T-cell (primary cell): ENCODE measurements at regions of chr12 and their contacts with region 1.

Region 1: GRCh38 chr12:50074936-50075807 is 10.0 kb upstream of the SMARCD1 start:
- DNase-seq: peak; percentile 38 to 88 (median 71)
- ATAC-seq: peak; percentile 89 to 94 (median 92)
- H3K4me3 ChIP-seq: no peak overlapping the region
- H3K4me3 Mint-ChIP-seq: no peak overlapping the region
- H3K27ac ChIP-seq: no peak overlapping the region
- H3K27ac Mint-ChIP-seq: no peak overlapping the region
- H3K4me1 ChIP-seq: peaks cover 0 to 14% of the 10 kb centered on the region in 2 experiments
- H3K4me1 Mint-ChIP-seq: peaks cover 8 to 13% (median 9%) of the 10 kb centered on the region in 3 donors
- H3K27me3 ChIP-seq: peaks cover 0 to 8% of the 10 kb centered on the region in 2 experiments
- H3K27me3 Mint-ChIP-seq: peaks cover 0 to 5% of the 10 kb centered on the region in 2 donors

Region 2: GRCh38 chr12:49983892-49984291 is 91.3 kb before region 1 on chr12:
- CTCF ChIA-PET with region 1: no interaction called
- POLR2A ChIA-PET with region 1: no interaction called
- DNase-seq: no peak
- ATAC-seq: no peak
- H3K4me3 ChIP-seq: no peak overlapping the region
- H3K4me3 Mint-ChIP-seq: no peak overlapping the region
- H3K27ac ChIP-seq: no peak overlapping the region
- H3K27ac Mint-ChIP-seq: no peak overlapping the region
- H3K4me1 ChIP-seq: no peaks in the 10 kb centered on the region
- H3K4me1 Mint-ChIP-seq: no peaks in the 10 kb centered on the region
- H3K27me3 ChIP-seq: no peaks in the 10 kb centered on the region
- H3K27me3 Mint-ChIP-seq: no peaks in the 10 kb centered on the region

Region 3: GRCh38 chr12:50147281-50147680 is 72.1 kb after region 1 on chr12:
- CTCF ChIA-PET with region 1: no interaction called
- POLR2A ChIA-PET with region 1: no interaction called
- DNase-seq: no peak
- ATAC-seq: no peak
- H3K4me3 ChIP-seq: no peak overlapping the region
- H3K4me3 Mint-ChIP-seq: no peak overlapping the region
- H3K27ac ChIP-seq: no peak overlapping the region
- H3K27ac Mint-ChIP-seq: no peak overlapping the region
- H3K4me1 ChIP-seq: no peaks in the 10 kb centered on the region
- H3K4me1 Mint-ChIP-seq: peaks cover 16 to 23% (median 23%) of the 10 kb centered on the region in 3 donors
- H3K27me3 ChIP-seq: no peaks in the 10 kb centered on the region
- H3K27me3 Mint-ChIP-seq: no peaks in the 10 kb centered on the region

Region 4: DNA sequence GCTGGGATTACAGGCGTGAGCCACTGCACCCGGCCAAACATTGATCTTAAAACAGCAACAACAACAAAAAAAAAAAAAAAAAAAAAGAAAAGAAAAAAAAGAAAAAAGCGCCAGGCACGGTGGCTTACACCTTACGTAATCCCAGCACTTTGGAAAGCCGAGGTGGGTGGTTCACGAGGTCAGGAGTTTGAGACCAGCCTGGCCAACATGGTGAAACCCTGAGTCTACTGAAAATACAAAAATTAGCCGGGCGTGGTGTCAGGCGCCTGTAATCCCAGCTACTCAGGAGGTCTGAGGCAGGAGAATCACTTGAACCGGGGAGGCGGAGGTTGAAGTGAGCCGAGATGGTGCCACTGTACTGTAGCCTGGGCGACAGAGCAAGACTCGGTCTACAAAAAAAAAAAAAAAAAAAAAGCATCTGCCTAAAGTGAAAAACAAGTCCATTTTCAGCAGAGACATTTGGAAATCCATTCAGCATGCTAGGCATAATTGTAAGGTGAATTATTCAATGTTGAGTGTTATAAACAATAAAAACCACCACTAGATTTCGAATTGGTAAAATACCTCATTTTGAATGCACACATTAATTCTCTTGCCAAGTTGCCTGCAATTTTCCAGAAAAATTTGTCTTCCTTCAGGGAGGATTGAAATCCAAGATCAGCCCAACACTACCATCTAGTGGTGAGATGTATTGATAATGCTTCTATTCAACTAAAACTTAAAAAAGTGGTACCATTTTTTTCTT is 100.0 kb after region 1 on chr12:
- CTCF ChIA-PET with region 1: interaction called, 11 to 12 read pairs
- POLR2A ChIA-PET with region 1: no interaction called
- DNase-seq: peak in 4 of 35 experiments; percentile 15 to 82 (median 30)
- ATAC-seq: peak in 2 of 4 experiments; percentile 26 to 59
- H3K4me3 ChIP-seq: no peak overlapping the region
- H3K4me3 Mint-ChIP-seq: no peak overlapping the region
- H3K27ac ChIP-seq: no peak overlapping the region
- H3K27ac Mint-ChIP-seq: no peak overlapping the region
- H3K4me1 ChIP-seq: no peaks in the 10 kb centered on the region
- H3K4me1 Mint-ChIP-seq: no peaks in the 10 kb centered on the region
- H3K27me3 ChIP-seq: no peaks in the 10 kb centered on the region
- H3K27me3 Mint-ChIP-seq: no peaks in the 10 kb centered on the region

Region 5: DNA sequence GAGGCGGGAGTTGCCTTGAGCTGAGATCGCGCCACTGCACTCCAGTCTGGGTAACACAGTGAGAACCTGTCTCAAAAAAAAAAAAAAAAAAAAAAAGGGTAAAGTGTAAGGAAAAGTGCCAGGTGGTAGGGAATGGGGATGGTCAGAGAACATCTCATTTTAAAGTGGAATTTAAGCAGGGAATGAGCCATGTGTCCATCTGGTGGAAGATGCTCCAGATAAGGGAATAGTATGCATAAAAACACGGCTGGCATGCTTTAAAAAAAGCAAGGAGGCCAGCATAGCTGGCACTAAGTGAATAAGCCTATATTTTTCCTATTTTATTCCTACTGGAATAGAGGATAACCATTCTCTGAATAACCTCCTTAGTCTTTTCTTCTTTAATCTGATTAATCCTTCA is 287.5 kb after region 1 on chr12:
- CTCF ChIA-PET with region 1: interaction called in 1 of 2 experiments, 12 read pairs
- POLR2A ChIA-PET with region 1: no interaction called
- DNase-seq: no peak
- ATAC-seq: no peak
- H3K4me3 ChIP-seq: no peak overlapping the region
- H3K4me3 Mint-ChIP-seq: no peak overlapping the region
- H3K27ac ChIP-seq: no peak overlapping the region
- H3K27ac Mint-ChIP-seq: no peak overlapping the region
- H3K4me1 ChIP-seq: no peaks in the 10 kb centered on the region
- H3K4me1 Mint-ChIP-seq: no peaks in the 10 kb centered on the region
- H3K27me3 ChIP-seq: peaks cover 0 to 6% of the 10 kb centered on the region in 2 experiments
- H3K27me3 Mint-ChIP-seq: peaks cover 0 to 3% of the 10 kb centered on the region in 2 donors

Region 6: GRCh38 chr12:50699940-50700339 is 624.8 kb after region 1 on chr12:
- CTCF ChIA-PET with region 1: no interaction called
- POLR2A ChIA-PET with region 1: no interaction called
- DNase-seq: no peak
- ATAC-seq: no peak
- H3K4me3 ChIP-seq: no peak overlapping the region
- H3K4me3 Mint-ChIP-seq: no peak overlapping the region
- H3K27ac ChIP-seq: no peak overlapping the region
- H3K27ac Mint-ChIP-seq: no peak overlapping the region
- H3K4me1 ChIP-seq: no peaks in the 10 kb centered on the region
- H3K4me1 Mint-ChIP-seq: no peaks in the 10 kb centered on the region
- H3K27me3 ChIP-seq: no peaks in the 10 kb centered on the region
- H3K27me3 Mint-ChIP-seq: no peaks in the 10 kb centered on the region